ENCODE measurements at regions of chr2 and their contacts with region 1.

Region 1: GRCh38 chr2:25851740-25852503 is 26.4 kb downstream of the ASXL2 start:
- DNase-seq: peak; percentile 87 to 93 (median 90)
- H3K4me3 ChIP-seq: peak overlapping the region in 4 of 7 experiments; percentile 22 to 72 (median 46)
- H3K27ac ChIP-seq: peak overlapping the region in 1 of 2 experiments; percentile 76
- H3K4me1 ChIP-seq: peaks cover 14 to 33% (median 24%) of the 10 kb centered on the region in 4 experiments
- H3K27me3 ChIP-seq: no peaks in the 10 kb centered on the region

Region 2: GRCh38 chr2:25606892-25607291 is 245.0 kb before region 1 on chr2:
- CTCF ChIA-PET with region 1: interaction called, 17 read pairs
- POLR2A ChIA-PET with region 1: no interaction called
- DNase-seq: peak; percentile 42 to 72 (median 69)
- H3K4me3 ChIP-seq: no peak overlapping the region
- H3K27ac ChIP-seq: no peak overlapping the region
- H3K4me1 ChIP-seq: peaks cover 0 to 4% (median under 1%) of the 10 kb centered on the region in 4 experiments
- H3K27me3 ChIP-seq: no peaks in the 10 kb centered on the region

Region 3: DNA sequence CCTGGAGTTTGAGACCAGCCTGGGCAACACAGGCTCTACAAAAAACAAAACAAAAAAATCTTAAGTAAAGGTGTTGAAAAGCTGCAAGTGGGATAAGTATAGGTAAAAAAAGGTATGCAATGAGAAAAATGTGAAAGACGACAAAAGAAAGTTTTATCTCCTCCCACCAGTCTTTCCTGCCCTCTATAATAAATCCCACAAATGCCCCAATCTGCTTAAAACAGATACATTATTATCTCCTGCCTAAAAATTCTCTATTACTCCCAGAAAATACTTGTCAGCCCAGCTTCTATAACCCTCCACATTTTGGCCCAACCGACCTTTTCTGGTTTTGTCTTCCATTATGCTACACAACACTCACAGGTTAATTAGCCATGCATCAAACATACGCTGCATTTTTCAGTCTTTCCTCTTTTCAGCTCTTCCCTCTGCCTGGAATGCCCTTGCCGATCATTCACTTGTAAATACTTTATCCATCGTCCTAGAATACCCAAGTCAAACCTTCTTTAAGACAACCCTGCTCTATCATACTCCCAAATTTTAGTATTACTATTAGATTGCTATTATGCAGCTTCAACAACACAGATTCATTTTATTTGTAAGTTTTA is 15.6 kb after region 1 on chr2:
- CTCF ChIA-PET with region 1: interaction called, 50 read pairs
- POLR2A ChIA-PET with region 1: no interaction called
- DNase-seq: peak in 1 of 3 donors; percentile 45
- H3K4me3 ChIP-seq: no peak overlapping the region
- H3K27ac ChIP-seq: no peak overlapping the region
- H3K4me1 ChIP-seq: peaks cover 0 to 4% (median 0%) of the 10 kb centered on the region in 4 experiments
- H3K27me3 ChIP-seq: no peaks in the 10 kb centered on the region

Region 4: GRCh38 chr2:25878361-25879132 is 26.6 kb after region 1 on chr2 and contains the start of gene ASXL2:
- CTCF ChIA-PET with region 1: interaction called, 21 read pairs
- POLR2A ChIA-PET with region 1: no interaction called
- DNase-seq: peak; percentile 98 to 99 (median 99)
- H3K4me3 ChIP-seq: peak within 1 kb of the TSS; percentile 89 to 100 (median 95)
- H3K27ac ChIP-seq: peak within 1 kb of the TSS; percentile 83 to 93
- H3K4me1 ChIP-seq: peaks cover 9 to 26% (median 17%) of the 10 kb centered on the region in 4 experiments
- H3K27me3 ChIP-seq: no peaks in the 10 kb centered on the region

Region 5: DNA sequence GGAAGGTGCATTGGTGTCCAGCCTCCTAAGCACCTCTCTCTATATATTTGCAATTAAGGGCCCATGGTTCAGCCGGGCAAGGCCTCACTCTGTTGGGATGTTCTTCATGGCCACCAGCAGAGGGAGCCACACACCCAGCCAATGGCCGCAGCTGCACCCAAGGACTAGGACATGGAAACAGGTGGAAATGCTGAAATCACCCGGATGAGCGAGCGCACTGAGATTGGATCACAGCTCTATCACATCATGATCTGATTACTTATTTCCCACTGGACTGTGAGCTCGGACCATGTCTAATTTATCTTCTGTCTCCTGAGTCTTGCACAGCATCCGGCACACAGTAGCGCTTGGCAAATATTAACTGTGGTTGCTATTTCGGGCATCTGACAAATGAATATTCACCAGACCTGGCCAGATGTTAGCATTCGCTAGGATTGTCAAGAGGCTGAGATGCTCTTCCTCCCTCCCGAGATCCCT is 99.2 kb after region 1 on chr2:
- CTCF ChIA-PET with region 1: interaction called, 104 read pairs
- POLR2A ChIA-PET with region 1: no interaction called
- DNase-seq: peak; percentile 81 to 90 (median 84)
- H3K4me3 ChIP-seq: no peak overlapping the region
- H3K27ac ChIP-seq: no peak overlapping the region
- H3K4me1 ChIP-seq: no peaks in the 10 kb centered on the region
- H3K27me3 ChIP-seq: no peaks in the 10 kb centered on the region

Region 6: GRCh38 chr2:26144953-26145680 is 293.2 kb after region 1 on chr2:
- CTCF ChIA-PET with region 1: interaction called, 16 read pairs
- POLR2A ChIA-PET with region 1: no interaction called
- DNase-seq: peak; percentile 70 to 84 (median 80)
- H3K4me3 ChIP-seq: no peak overlapping the region
- H3K27ac ChIP-seq: no peak overlapping the region
- H3K4me1 ChIP-seq: peaks cover 0 to 12% (median 5%) of the 10 kb centered on the region in 4 experiments
- H3K27me3 ChIP-seq: peaks cover 0 to 4% (median 2%) of the 10 kb centered on the region in 5 experiments

Region 7: GRCh38 chr2:26414311-26414710 is 562.4 kb after region 1 on chr2:
- CTCF ChIA-PET with region 1: no interaction called
- POLR2A ChIA-PET with region 1: no interaction called
- DNase-seq: peak in 1 of 3 donors; percentile 19
- H3K4me3 ChIP-seq: no peak overlapping the region
- H3K27ac ChIP-seq: no peak overlapping the region
- H3K4me1 ChIP-seq: peaks cover 0 to 8% (median 4%) of the 10 kb centered on the region in 4 experiments
- H3K27me3 ChIP-seq: no peaks in the 10 kb centered on the region